ENCODE measurements at regions of chr19 and their contacts with region 1.

Region 1: DNA sequence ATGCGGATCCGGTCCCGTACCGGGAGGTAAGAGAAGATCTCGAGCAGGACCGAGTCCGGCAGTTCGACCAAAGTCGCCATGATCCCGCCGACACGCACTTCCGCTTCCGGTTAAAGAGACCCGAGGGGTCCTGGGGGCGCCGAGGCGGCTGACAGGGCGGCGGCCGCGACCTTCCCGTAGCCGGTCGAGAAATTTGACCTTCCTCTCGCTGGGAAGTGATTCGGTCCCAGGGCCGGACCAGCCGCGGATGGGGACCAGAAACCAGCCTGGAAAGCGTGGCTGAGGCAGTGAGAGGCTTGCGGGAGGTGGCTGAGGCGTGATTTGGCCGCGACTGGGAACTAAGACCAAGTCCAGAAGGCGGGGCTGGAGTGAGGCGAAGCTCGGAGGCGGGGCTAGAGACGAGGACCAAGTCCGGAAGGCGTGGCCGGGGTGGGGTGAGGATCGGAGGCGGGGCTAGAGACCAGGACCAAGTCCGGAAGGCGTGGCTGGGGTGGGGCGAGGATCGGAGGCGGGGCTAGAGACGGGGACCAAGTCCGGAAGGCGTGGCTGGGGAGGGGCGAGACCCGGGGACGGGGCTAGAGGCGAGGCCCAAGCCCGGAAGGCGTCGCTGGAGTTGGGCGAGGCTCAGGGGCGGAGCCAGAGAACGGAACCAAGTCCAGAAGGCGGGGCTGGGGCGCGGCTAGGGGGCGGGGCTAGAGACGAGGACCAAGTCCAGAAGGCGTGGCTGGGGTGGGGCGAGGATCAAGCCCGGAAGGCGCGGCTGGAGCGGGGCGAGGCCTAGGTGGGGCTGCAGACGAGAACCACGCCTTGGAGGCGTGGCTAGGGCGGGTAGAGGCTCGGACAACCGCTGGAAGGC is at the start of gene FBXL12:
- DNase-seq: peak; percentile 100
- H3K4me3 ChIP-seq: peak within 1 kb of the TSS; percentile 95
- H3K4me3 Mint-ChIP-seq: peak within 1 kb of the TSS; percentile 89 to 95 (median 91)
- H3K27ac ChIP-seq: peak within 1 kb of the TSS; percentile 92
- H3K27ac Mint-ChIP-seq: peak within 1 kb of the TSS; percentile 86 to 97 (median 96)
- H3K4me1 ChIP-seq: peaks cover 19% of the 10 kb centered on the region
- H3K4me1 Mint-ChIP-seq: peaks cover 21 to 40% (median 34%) of the 10 kb centered on the region in 4 donors
- H3K27me3 ChIP-seq: no peaks in the 10 kb centered on the region
- H3K27me3 Mint-ChIP-seq: no peaks in the 10 kb centered on the region
- total RNA-seq, gene FBXL12: 27.8 to 30.7 TPM

Region 2: GRCh38 chr19:9309139-9309973 is 509.6 kb before region 1 on chr19 and contains the start of gene ZNF699:
- CTCF ChIA-PET with region 1: no interaction called
- POLR2A ChIA-PET with region 1: no interaction called
- intact Hi-C with region 1: loop called (anchors 1 kb)
- DNase-seq: peak; percentile 97 to 100 (median 97)
- H3K4me3 ChIP-seq: peak within 1 kb of the TSS; percentile 92 to 93
- H3K4me3 Mint-ChIP-seq: peak within 1 kb of the TSS; percentile 89 to 99 (median 94)
- H3K27ac ChIP-seq: peak within 1 kb of the TSS; percentile 96
- H3K27ac Mint-ChIP-seq: peak within 1 kb of the TSS; percentile 88 to 99 (median 97)
- H3K4me1 ChIP-seq: peaks cover 23% of the 10 kb centered on the region
- H3K4me1 Mint-ChIP-seq: peaks cover 21 to 47% (median 34%) of the 10 kb centered on the region in 4 donors
- H3K27me3 ChIP-seq: no peaks in the 10 kb centered on the region
- H3K27me3 Mint-ChIP-seq: no peaks in the 10 kb centered on the region
- total RNA-seq, gene ZNF699: 20.9 to 22.1 TPM

Region 3: GRCh38 chr19:9485140-9485539 is 333.8 kb before region 1 on chr19:
- CTCF ChIA-PET with region 1: no interaction called
- POLR2A ChIA-PET with region 1: no interaction called
- intact Hi-C with region 1: no loop called
- DNase-seq: no peak
- H3K4me3 ChIP-seq: no peak overlapping the region
- H3K4me3 Mint-ChIP-seq: no peak overlapping the region
- H3K27ac ChIP-seq: no peak overlapping the region
- H3K27ac Mint-ChIP-seq: no peak overlapping the region
- H3K4me1 ChIP-seq: no peaks in the 10 kb centered on the region
- H3K4me1 Mint-ChIP-seq: no peaks in the 10 kb centered on the region
- H3K27me3 ChIP-seq: no peaks in the 10 kb centered on the region
- H3K27me3 Mint-ChIP-seq: no peaks in the 10 kb centered on the region

Region 4: GRCh38 chr19:9785367-9786331 is 33.3 kb before region 1 on chr19:
- CTCF ChIA-PET with region 1: no interaction called
- POLR2A ChIA-PET with region 1: no interaction called
- intact Hi-C with region 1: loop called (anchors 2 kb)
- DNase-seq: peak; percentile 89 to 96 (median 93)
- H3K4me3 ChIP-seq: peak overlapping the region in 1 of 2 donors; percentile 62
- H3K4me3 Mint-ChIP-seq: peak overlapping the region; percentile 82 to 93 (median 92)
- H3K27ac ChIP-seq: peak overlapping the region; percentile 77
- H3K27ac Mint-ChIP-seq: peak overlapping the region; percentile 85 to 99 (median 96)
- H3K4me1 ChIP-seq: peaks cover 12% of the 10 kb centered on the region
- H3K4me1 Mint-ChIP-seq: peaks cover 14 to 36% (median 27%) of the 10 kb centered on the region in 4 donors
- H3K27me3 ChIP-seq: no peaks in the 10 kb centered on the region
- H3K27me3 Mint-ChIP-seq: no peaks in the 10 kb centered on the region

Region 5: GRCh38 chr19:9834726-9835506 is 16.0 kb after region 1 on chr19 and contains the start of gene PIN1:
- CTCF ChIA-PET with region 1: no interaction called
- POLR2A ChIA-PET with region 1: interaction called, 7 read pairs
- intact Hi-C with region 1: loop called (anchors 1 kb)
- DNase-seq: peak; percentile 99 to 100 (median 99)
- H3K4me3 ChIP-seq: peak within 1 kb of the TSS; percentile 55 to 97
- H3K4me3 Mint-ChIP-seq: peak within 1 kb of the TSS; percentile 93 to 97 (median 96)
- H3K27ac ChIP-seq: peak within 1 kb of the TSS; percentile 74
- H3K27ac Mint-ChIP-seq: peak within 1 kb of the TSS; percentile 91 to 99 (median 97)
- H3K4me1 ChIP-seq: peaks cover 14% of the 10 kb centered on the region
- H3K4me1 Mint-ChIP-seq: peaks cover 10 to 34% (median 19%) of the 10 kb centered on the region in 4 donors
- H3K27me3 ChIP-seq: no peaks in the 10 kb centered on the region
- H3K27me3 Mint-ChIP-seq: no peaks in the 10 kb centered on the region
- total RNA-seq, gene PIN1: 72.1 to 76.9 TPM

Region 6: GRCh38 chr19:10027158-10027693 is 208.3 kb after region 1 on chr19:
- CTCF ChIA-PET with region 1: no interaction called
- POLR2A ChIA-PET with region 1: no interaction called
- intact Hi-C with region 1: no loop called
- DNase-seq: no peak
- H3K4me3 ChIP-seq: no peak overlapping the region
- H3K4me3 Mint-ChIP-seq: no peak overlapping the region
- H3K27ac ChIP-seq: no peak overlapping the region
- H3K27ac Mint-ChIP-seq: no peak overlapping the region
- H3K4me1 ChIP-seq: peaks cover 7% of the 10 kb centered on the region
- H3K4me1 Mint-ChIP-seq: peaks cover 0 to 4% (median 2%) of the 10 kb centered on the region in 4 donors
- H3K27me3 ChIP-seq: peaks cover 8% of the 10 kb centered on the region
- H3K27me3 Mint-ChIP-seq: peaks cover 15 to 18% of the 10 kb centered on the region in 2 donors